A549 (cell line): ENCODE measurements at regions of chr17 and their contacts with region 1.

Region 1: GRCh38 chr17:64145757-64146417 is 15.9 kb upstream of the ERN1 start:
- DNase-seq: peak; percentile 99 to 100
- ATAC-seq: peak; percentile 80 to 92
- H3K4me3 ChIP-seq: peak overlapping the region; percentile 73
- H3K27ac ChIP-seq: peak overlapping the region; percentile 93 to 98
- H3K4me1 ChIP-seq: peaks cover 27% of the 10 kb centered on the region; the same call in 2 of the 3 replicates
- CTCF ChIP-seq: no peak
- EP300 ChIP-seq: no peak
- POLR2A ChIP-seq: peak; percentile 97
- RAD21 ChIP-seq: no peak

Region 2: GRCh38 chr17:63773381-63774140 is 372.3 kb before region 1 on chr17 and contains the start of gene CCDC47:
- CTCF ChIA-PET with region 1: no interaction called
- POLR2A ChIA-PET with region 1: interaction called, 10 read pairs
- DNase-seq: peak; percentile 100
- ATAC-seq: peak; percentile 92 to 94
- H3K4me3 ChIP-seq: peak within 1 kb of the TSS; percentile 71
- H3K27ac ChIP-seq: peak within 1 kb of the TSS; percentile 98 to 99
- H3K4me1 ChIP-seq: peaks cover 30% of the 10 kb centered on the region
- CTCF ChIP-seq: no peak
- EP300 ChIP-seq: no peak
- POLR2A ChIP-seq: peak; percentile 94
- RAD21 ChIP-seq: no peak
- polyA plus RNA-seq, gene CCDC47: 135 and 163 TPM in 2 replicates

Region 3: GRCh38 chr17:64073771-64074703 is 71.8 kb before region 1 on chr17:
- CTCF ChIA-PET with region 1: interaction called, 3 read pairs
- POLR2A ChIA-PET with region 1: interaction called, 15 read pairs
- DNase-seq: no peak
- ATAC-seq: peak; percentile 54 to 59
- H3K4me3 ChIP-seq: no peak overlapping the region; the same call in 2 of the 3 replicates
- H3K27ac ChIP-seq: peak overlapping the region; percentile 89 to 90
- H3K4me1 ChIP-seq: peaks cover 39% of the 10 kb centered on the region
- CTCF ChIP-seq: no peak
- EP300 ChIP-seq: no peak
- POLR2A ChIP-seq: no peak
- RAD21 ChIP-seq: no peak

Region 4: GRCh38 chr17:64165367-64165766 is 19.5 kb after region 1 on chr17:
- CTCF ChIA-PET with region 1: interaction called, 11 read pairs
- POLR2A ChIA-PET with region 1: interaction called, 6 read pairs
- DNase-seq: no peak
- ATAC-seq: no peak
- H3K4me3 ChIP-seq: no peak overlapping the region
- H3K27ac ChIP-seq: no peak overlapping the region
- H3K4me1 ChIP-seq: no peaks in the 10 kb centered on the region
- CTCF ChIP-seq: no peak
- EP300 ChIP-seq: no peak
- POLR2A ChIP-seq: no peak
- RAD21 ChIP-seq: no peak

Region 5: GRCh38 chr17:64270885-64271284 is 125.0 kb after region 1 on chr17:
- CTCF ChIA-PET with region 1: interaction called, 3 read pairs
- POLR2A ChIA-PET with region 1: interaction called, 11 read pairs
- DNase-seq: no peak
- ATAC-seq: no peak
- H3K4me3 ChIP-seq: no peak overlapping the region
- H3K27ac ChIP-seq: no peak overlapping the region
- H3K4me1 ChIP-seq: no peaks in the 10 kb centered on the region
- CTCF ChIP-seq: no peak
- EP300 ChIP-seq: no peak
- POLR2A ChIP-seq: no peak
- RAD21 ChIP-seq: no peak